ENCODE measurements at regions of chr14 and their contacts with region 1.

Region 1: DNA sequence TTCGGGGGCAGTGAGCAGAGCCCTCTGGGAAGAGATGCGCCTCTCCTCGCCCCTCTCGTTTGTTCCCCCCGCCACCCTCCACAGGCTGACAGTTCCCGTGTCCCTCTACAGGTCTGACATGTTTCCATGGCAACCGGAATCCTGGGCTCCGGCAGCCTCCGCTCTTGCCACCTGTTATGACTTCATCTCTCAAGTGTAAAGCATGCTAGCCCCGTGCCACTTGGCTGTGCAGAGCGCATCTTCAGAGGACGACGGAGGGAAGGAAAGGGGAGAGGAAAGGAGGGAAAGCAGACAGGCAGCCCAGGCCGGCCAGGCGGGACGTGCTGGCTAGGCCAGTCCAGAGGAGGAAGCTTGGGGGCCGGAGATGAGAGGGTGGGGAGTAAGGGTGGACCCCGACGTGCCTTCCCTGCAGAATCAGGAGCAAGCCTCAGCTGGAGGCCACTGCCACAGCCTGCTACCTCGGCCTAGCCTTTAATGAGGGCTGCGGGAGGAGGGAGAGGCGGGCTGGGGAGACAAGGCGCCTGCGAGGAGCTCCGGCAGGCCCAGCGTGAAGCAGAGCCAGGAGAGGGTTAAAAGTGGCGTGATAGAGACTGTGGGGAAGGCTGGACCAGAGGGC is 214.3 kb downstream of the DPF3 start:
- DNase-seq: no peak

Region 2: GRCh38 chr14:72621387-72622065 is 58.1 kb before region 1 on chr14:
- intact Hi-C with region 1: no loop called
- DNase-seq: no peak

Region 3: DNA sequence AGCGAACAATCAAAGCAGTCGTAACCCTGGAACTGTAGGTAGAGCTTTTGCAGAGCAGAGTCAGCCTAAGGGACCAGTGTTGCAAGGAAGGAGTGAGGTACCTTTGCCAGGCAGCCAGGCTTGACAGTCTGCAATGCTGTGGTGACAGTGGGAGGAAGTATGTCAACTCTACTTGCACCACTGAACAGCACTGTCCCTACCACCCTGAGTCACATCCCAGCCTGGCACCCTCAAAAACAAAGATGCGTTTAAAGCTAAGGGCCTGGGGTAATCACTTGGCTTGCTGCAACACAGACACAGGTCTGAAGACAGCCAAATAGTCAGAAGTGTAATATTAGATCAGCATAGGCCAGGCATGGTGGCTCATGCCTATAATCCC is 72.4 kb after region 1 on chr14:
- intact Hi-C with region 1: loop called in 1 of 2 experiments (anchors 2 kb)
- DNase-seq: peak; percentile 36

Region 4: DNA sequence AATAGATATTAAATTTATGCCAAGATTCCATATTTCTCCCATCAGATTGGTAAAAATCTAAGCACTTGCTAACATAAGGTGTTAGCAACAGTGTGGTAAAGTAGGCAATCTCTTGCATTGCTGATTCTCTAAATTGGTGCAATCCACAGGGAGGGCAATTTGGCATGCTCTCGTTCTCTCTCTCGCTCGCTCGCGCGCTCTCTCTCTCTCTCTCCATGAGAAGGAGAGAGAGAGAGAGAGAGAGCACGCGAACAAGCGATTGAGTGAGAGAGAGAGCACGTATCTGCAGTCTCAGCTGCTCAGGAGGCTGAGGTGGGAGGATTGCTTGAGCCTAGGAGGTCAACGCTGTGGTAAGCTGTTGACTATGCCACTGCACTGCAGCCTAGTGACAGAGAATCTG is 482.6 kb after region 1 on chr14:
- intact Hi-C with region 1: loop called in 1 of 2 experiments (anchors 5 kb)
- DNase-seq: no peak

Measured in posterior vena cava (tissue), 2 donors.